ENCODE measurements at regions of chr2 and their contacts with region 1.

Region 1: DNA sequence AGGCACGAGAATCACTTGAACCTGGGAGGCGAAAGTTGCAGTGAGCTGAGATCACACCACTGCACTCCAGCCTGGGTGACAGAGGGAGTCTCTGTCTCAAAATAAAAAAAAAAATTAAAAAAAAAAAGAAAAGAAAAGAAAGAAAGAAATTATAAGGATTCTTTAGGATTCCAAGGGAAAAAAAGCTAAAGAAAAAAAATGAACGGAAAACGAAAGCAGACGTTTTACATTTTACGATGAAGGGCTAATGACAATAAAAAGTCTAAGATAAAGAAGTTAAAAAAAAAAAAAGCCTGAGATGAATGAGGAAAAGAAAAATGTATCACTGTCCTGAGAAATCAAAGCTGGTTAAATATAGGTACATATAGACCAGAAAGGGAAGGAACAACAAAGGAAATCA is 58.5 kb downstream of the SOS1 start:
- DNase-seq: no peak
- ATAC-seq: no peak
- H3K4me3 ChIP-seq: no peak overlapping the region
- H3K27ac ChIP-seq: no peak overlapping the region
- H3K4me1 ChIP-seq: no peaks in the 10 kb centered on the region
- H3K27me3 ChIP-seq: no peaks in the 10 kb centered on the region
- CTCF ChIP-seq: no peak
- POLR2A ChIP-seq: no peak

Region 2: GRCh38 chr2:38771632-38772031 is 290.7 kb before region 1 on chr2:
- intact Hi-C with region 1: no loop called
- DNase-seq: no peak
- ATAC-seq: no peak
- H3K4me3 ChIP-seq: no peak overlapping the region
- H3K27ac ChIP-seq: no peak overlapping the region
- H3K4me1 ChIP-seq: peaks cover 7% of the 10 kb centered on the region
- H3K27me3 ChIP-seq: no peaks in the 10 kb centered on the region
- CTCF ChIP-seq: no peak
- POLR2A ChIP-seq: no peak

Region 3: DNA sequence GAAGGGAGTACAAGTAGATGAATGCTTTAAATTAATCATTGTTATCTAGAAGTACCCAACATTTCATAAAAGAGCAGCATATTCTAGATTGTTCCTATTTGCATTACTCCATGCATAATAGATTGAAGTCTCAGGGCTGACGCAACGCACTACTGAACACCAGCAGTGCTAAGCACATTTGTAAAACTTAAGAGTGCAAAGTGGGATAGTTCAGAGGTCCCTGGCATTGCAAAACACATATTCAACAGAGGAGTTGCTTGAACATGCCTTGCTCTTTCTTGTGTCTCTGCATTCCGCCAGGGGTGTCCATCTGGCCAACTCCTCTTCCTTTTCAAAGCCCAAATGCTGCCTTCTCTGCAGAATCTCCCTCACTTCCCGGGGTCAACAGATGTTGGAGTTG is 159.2 kb after region 1 on chr2:
- intact Hi-C with region 1: loop called (anchors 5 kb)
- DNase-seq: no peak
- ATAC-seq: no peak
- H3K4me3 ChIP-seq: no peak overlapping the region
- H3K27ac ChIP-seq: no peak overlapping the region
- H3K4me1 ChIP-seq: no peaks in the 10 kb centered on the region
- H3K27me3 ChIP-seq: no peaks in the 10 kb centered on the region
- CTCF ChIP-seq: no peak
- POLR2A ChIP-seq: no peak

Measured in body of pancreas (tissue), 4 donors.